PC-3 (cell line): ENCODE measurements at regions of chr2 and their contacts with region 1.

Region 1: DNA sequence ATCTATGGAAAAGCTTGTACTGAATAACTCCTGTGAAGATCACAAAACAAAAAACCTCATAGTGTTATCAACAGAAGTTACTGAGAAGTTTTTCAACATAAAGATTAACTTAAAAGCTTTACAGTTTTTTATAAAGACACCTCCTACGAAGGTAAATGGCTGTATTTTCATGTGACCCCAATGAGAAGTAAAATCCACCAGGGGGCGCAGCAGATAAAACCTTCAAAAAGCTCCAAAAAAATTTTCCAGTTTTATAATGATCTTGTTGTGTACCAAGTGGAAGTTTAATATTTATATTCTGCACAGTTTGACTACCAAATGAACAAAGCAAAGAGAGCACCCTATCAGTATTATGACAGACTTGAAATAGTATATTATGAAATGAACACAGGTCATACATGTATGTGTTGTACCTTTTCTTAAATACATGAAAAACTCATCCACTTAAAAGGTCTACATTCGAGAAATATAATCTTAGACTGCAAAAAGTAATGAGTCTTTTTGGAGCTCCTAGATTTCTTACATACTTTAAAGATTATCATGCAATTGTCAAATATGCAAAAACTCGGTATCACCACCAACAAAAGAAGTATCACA is 38.5 kb downstream of the PNO1 start:
- DNase-seq: peak; percentile 76
- ATAC-seq: no peak
- H3K4me3 ChIP-seq: no peak overlapping the region
- H3K27ac ChIP-seq: no peak overlapping the region
- H3K4me1 ChIP-seq: peaks cover 45% of the 10 kb centered on the region
- H3K27me3 ChIP-seq: no peaks in the 10 kb centered on the region
- CTCF ChIP-seq: peak; percentile 88

Region 2: DNA sequence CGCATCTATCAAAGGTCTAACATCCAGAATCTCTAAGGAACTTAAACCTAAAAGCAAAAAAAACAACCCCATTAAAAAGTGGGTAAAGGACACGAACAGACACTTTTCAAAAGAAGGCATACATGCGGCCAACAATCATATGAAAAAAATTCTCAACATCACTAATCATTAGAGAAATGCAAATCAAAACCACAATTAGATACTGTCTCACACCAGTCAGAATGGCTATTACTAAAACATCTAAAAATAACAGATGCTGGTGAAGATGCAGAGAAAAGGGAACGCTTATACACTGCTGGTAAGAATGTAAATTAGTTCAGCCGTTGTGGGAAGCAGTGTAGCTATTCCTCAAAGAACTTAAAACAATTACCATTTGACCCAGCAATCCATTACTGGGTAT is 18.2 kb after region 1 on chr2:
- CTCF ChIA-PET with region 1: no interaction called
- POLR2A ChIA-PET with region 1: no interaction called
- intact Hi-C with region 1: no loop called
- DNase-seq: no peak
- ATAC-seq: no peak
- H3K4me3 ChIP-seq: no peak overlapping the region
- H3K27ac ChIP-seq: no peak overlapping the region
- H3K4me1 ChIP-seq: no peaks in the 10 kb centered on the region
- H3K27me3 ChIP-seq: no peaks in the 10 kb centered on the region
- CTCF ChIP-seq: no peak

Region 3: GRCh38 chr2:68225119-68225632 is 29.0 kb after region 1 on chr2:
- CTCF ChIA-PET with region 1: interaction called, 13 read pairs
- POLR2A ChIA-PET with region 1: no interaction called
- intact Hi-C with region 1: no loop called
- DNase-seq: peak; percentile 48
- ATAC-seq: peak; percentile 77
- H3K4me3 ChIP-seq: no peak overlapping the region
- H3K27ac ChIP-seq: no peak overlapping the region
- H3K4me1 ChIP-seq: no peaks in the 10 kb centered on the region
- H3K27me3 ChIP-seq: no peaks in the 10 kb centered on the region
- CTCF ChIP-seq: peak; percentile 61

Region 4: GRCh38 chr2:68238955-68239822 is 43.0 kb after region 1 on chr2:
- CTCF ChIA-PET with region 1: no interaction called
- POLR2A ChIA-PET with region 1: no interaction called
- intact Hi-C with region 1: loop called (anchors 5 kb)
- DNase-seq: no peak
- ATAC-seq: peak; percentile 49
- H3K4me3 ChIP-seq: no peak overlapping the region
- H3K27ac ChIP-seq: no peak overlapping the region; the same call in 1 of the 2 replicates
- H3K4me1 ChIP-seq: peaks cover 31% of the 10 kb centered on the region
- H3K27me3 ChIP-seq: no peaks in the 10 kb centered on the region
- CTCF ChIP-seq: no peak

Region 5: GRCh38 chr2:68251187-68251854 is 55.1 kb after region 1 on chr2:
- CTCF ChIA-PET with region 1: no interaction called
- POLR2A ChIA-PET with region 1: no interaction called
- intact Hi-C with region 1: loop called (anchors 1 kb)
- DNase-seq: peak; percentile 93
- ATAC-seq: peak; percentile 60
- H3K4me3 ChIP-seq: peak overlapping the region; percentile 74
- H3K27ac ChIP-seq: peak overlapping the region; percentile 58
- H3K4me1 ChIP-seq: peaks cover 41% of the 10 kb centered on the region
- H3K27me3 ChIP-seq: no peaks in the 10 kb centered on the region
- CTCF ChIP-seq: peak; percentile 69

Region 6: DNA sequence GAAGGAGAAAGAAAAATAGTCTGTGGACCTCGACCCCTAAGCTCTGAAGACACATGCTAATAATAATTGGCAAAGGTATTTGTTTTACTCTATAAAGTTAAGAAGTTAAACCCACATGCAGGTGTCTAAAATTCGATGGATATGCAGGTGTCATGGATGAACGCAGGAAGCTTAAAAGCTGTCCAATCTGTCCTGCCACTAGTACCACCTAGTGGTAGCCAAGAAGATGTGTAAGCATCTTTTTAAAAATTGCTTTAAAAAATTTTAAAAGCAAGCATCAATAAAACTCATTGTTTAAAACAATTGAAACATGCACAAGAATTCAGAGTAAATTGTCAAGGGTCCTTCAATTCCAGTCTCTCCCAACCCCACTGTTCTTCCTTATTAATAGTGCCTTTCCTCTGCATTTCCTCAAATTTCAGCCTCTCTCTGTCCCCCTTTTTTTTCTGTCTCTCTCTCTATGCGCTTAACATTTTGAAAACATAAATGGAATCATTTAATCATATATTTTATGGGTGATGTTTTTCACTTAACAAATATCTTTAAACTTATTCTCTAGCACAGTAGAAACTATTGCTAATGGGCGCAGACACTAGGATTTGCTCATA is 86.7 kb after region 1 on chr2:
- CTCF ChIA-PET with region 1: interaction called, 5 read pairs
- POLR2A ChIA-PET with region 1: interaction called, 4 read pairs
- intact Hi-C with region 1: loop called (anchors 2 kb)
- DNase-seq: peak; percentile 55
- ATAC-seq: peak; percentile 73
- H3K4me3 ChIP-seq: no peak overlapping the region
- H3K27ac ChIP-seq: no peak overlapping the region
- H3K4me1 ChIP-seq: peaks cover 21% of the 10 kb centered on the region
- H3K27me3 ChIP-seq: no peaks in the 10 kb centered on the region
- CTCF ChIP-seq: peak; percentile 86